Activated CD8-positive, alpha-beta T cell treated with anti-CD3 and anti-CD28 coated beads for 36 hours (primary cell): ENCODE measurements at regions of chr17 and their contacts with region 1.

Region 1: DNA sequence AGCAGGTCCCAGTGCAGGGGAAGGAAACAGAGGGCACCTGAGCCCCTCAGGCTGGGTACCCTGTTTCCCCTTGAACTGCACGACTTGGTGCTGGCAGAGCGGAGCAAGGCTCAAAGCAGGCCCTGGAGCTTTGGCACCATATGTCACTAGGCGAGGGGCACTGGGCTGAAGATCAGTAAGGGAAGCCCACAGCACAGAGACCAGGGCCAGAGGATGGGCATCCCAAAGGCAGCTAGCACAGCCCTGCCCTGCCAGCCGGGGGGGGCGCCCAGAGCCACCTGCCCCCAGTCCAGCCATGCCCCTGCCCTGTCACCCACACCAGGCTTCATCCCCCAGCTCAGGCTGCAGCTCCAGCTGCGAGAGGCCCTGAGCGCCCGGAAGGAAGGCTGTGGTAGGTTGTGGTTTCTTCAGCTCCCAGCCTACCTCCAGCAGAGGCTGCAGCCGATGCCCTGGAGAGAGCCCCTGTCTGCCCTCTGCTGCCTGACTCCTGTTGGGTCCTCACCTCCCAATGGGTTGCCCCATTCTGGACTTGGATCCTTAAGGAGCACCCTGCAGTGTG is 10.9 kb downstream of the NHERF1 start:
- DNase-seq: peak; percentile 75
- ATAC-seq: peak; percentile 82
- H3K4me3 Mint-ChIP-seq: peak overlapping the region; percentile 51
- H3K27ac Mint-ChIP-seq: peak overlapping the region; percentile 81
- H3K4me1 Mint-ChIP-seq: peaks cover 68% of the 10 kb centered on the region
- H3K27me3 Mint-ChIP-seq: no peaks in the 10 kb centered on the region
- CTCF ChIP-seq: no peak

Region 2: GRCh38 chr17:74728033-74728701 is 31.2 kb before region 1 on chr17:
- CTCF ChIA-PET with region 1: no interaction called
- POLR2A ChIA-PET with region 1: no interaction called
- intact Hi-C with region 1: no loop called
- DNase-seq: no peak
- ATAC-seq: no peak
- H3K4me3 Mint-ChIP-seq: no peak overlapping the region
- H3K27ac Mint-ChIP-seq: no peak overlapping the region
- H3K4me1 Mint-ChIP-seq: peaks cover 13% of the 10 kb centered on the region
- H3K27me3 Mint-ChIP-seq: no peaks in the 10 kb centered on the region
- CTCF ChIP-seq: no peak

Region 3: GRCh38 chr17:74770498-74771318 is 11.4 kb after region 1 on chr17:
- CTCF ChIA-PET with region 1: interaction called, 54 read pairs
- POLR2A ChIA-PET with region 1: interaction called, 18 read pairs
- intact Hi-C with region 1: no loop called
- DNase-seq: peak; percentile 78
- ATAC-seq: peak; percentile 88
- H3K4me3 Mint-ChIP-seq: no peak overlapping the region
- H3K27ac Mint-ChIP-seq: peak overlapping the region; percentile 72
- H3K4me1 Mint-ChIP-seq: peaks cover 30% of the 10 kb centered on the region
- H3K27me3 Mint-ChIP-seq: no peaks in the 10 kb centered on the region
- CTCF ChIP-seq: peak; percentile 76

Region 4: DNA sequence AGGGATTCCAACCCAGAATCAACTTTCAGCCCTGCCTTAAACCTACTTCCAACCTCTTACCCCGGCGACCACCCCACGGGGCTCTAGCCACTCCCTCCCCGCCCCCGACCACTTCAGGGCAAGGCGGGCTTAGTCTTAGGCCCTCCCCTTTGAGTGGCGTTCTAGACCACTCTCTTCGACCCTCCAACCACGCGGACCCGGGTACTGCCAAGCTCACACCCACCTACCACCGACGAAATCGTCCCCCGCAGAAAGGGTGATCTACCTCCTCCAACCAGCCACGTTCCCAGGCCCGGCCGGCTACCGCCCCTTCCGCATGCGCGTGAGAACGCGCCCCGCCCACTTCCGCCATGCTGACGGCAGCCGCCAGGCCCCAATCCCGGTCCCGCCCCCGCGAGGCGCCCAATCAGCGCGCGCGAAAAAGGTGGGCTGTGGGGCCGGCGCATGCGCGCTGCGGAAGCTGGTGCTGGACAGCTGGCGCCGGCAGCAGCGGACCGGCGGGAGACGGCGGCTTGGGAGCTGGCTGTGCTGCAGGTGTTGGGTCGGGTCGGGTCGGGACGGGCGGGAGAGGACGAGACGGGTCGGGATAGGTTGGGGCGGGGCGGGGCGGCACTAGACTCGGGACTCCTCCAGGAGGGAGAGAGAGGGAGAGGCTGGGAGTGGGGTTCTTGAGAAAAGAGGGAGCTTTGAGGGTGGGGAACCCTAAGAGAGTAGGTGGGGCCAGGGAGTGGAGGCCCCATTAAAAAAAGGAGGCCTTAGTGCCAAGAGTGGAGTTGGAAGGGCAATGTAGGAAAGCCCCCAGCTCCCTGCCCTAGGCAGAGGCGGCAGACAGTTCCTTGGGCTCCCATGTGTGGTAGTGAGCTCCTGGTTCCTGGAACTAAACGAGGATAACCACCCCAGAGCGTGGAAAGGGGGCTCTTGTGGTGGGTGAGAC is 17.0 kb after region 1 on chr17 and contains the start of gene NAT9:
- CTCF ChIA-PET with region 1: interaction called, 54 read pairs
- POLR2A ChIA-PET with region 1: interaction called, 18 read pairs
- intact Hi-C with region 1: no loop called
- DNase-seq: peak; percentile 98
- ATAC-seq: peak; percentile 75
- H3K4me3 Mint-ChIP-seq: peak within 1 kb of the TSS; percentile 100
- H3K27ac Mint-ChIP-seq: peak within 1 kb of the TSS; percentile 96
- H3K4me1 Mint-ChIP-seq: peaks cover 57% of the 10 kb centered on the region
- H3K27me3 Mint-ChIP-seq: no peaks in the 10 kb centered on the region
- CTCF ChIP-seq: no peak
- total RNA-seq, gene NAT9: 35.5 to 42.4 TPM

Region 5: GRCh38 chr17:74833501-74834377 is 74.4 kb after region 1 on chr17:
- CTCF ChIA-PET with region 1: no interaction called
- POLR2A ChIA-PET with region 1: no interaction called
- intact Hi-C with region 1: no loop called
- DNase-seq: no peak
- ATAC-seq: no peak
- H3K4me3 Mint-ChIP-seq: no peak overlapping the region
- H3K27ac Mint-ChIP-seq: no peak overlapping the region
- H3K4me1 Mint-ChIP-seq: no peaks in the 10 kb centered on the region
- H3K27me3 Mint-ChIP-seq: no peaks in the 10 kb centered on the region
- CTCF ChIP-seq: no peak